Activated B cell treated with CpG ODN at 0.5 μM for 24 hours (primary cell): ENCODE measurements at regions of chr16 and their contacts with region 1.

Region 1: GRCh38 chr16:12455287-12455798 is 348.3 kb downstream of the CPPED1 start:
- DNase-seq: peak; percentile 24
- ATAC-seq: no peak
- H3K4me3 Mint-ChIP-seq: no peak overlapping the region
- H3K27ac Mint-ChIP-seq: peak overlapping the region; percentile 8
- H3K4me1 Mint-ChIP-seq: peaks cover 48% of the 10 kb centered on the region
- H3K27me3 Mint-ChIP-seq: no peaks in the 10 kb centered on the region
- CTCF ChIP-seq: peak; percentile 24

Region 2: DNA sequence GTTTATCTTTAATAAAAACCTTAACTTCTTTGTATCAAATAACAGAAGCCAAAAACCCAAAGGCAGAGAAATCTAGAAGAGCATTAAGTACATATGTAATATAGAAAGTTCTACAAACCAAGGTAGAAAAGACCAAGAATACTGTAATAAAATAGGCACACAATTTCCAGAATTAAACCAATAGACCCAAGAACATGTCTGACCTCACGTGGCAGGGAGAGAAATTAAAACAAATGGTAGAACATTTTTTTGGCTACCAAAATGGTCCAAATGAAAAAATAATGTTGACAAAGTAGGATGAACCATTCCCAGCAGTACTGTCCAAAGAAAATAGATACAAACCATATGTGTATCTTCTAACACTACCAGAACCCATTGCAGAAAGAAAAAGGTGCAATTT is 164.8 kb after region 1 on chr16:
- CTCF ChIA-PET with region 1: no interaction called
- POLR2A ChIA-PET with region 1: no interaction called
- intact Hi-C with region 1: loop called (anchors 1 kb)
- DNase-seq: no peak
- ATAC-seq: no peak
- H3K4me3 Mint-ChIP-seq: no peak overlapping the region
- H3K27ac Mint-ChIP-seq: no peak overlapping the region
- H3K4me1 Mint-ChIP-seq: no peaks in the 10 kb centered on the region
- H3K27me3 Mint-ChIP-seq: peaks cover 2% of the 10 kb centered on the region
- CTCF ChIP-seq: no peak